ENCODE measurements at regions of chr2 and their contacts with region 1.

Region 1: GRCh38 chr2:189661148-189661956 is at the start of gene ASNSD1:
- DNase-seq: peak; percentile 96 to 98 (median 98)
- ATAC-seq: peak; percentile 96
- H3K4me3 ChIP-seq: peak within 1 kb of the TSS; percentile 78
- H3K27ac ChIP-seq: peak within 1 kb of the TSS; percentile 88
- H3K4me1 ChIP-seq: no peaks in the 10 kb centered on the region; a peak in 1 of 5 replicates
- H3K27me3 ChIP-seq: no peaks in the 10 kb centered on the region
- CTCF ChIP-seq: peak; percentile 93 to 99 (median 98)
- EP300 ChIP-seq: peak; percentile 27; the same call in 1 of the 2 replicates
- POLR2A ChIP-seq: peak; percentile 92
- RAD21 ChIP-seq: peak; percentile 92 to 97
- polyA plus RNA-seq, gene ASNSD1: 38.3 to 56.4 TPM

Region 2: GRCh38 chr2:189698020-189698887 is 36.9 kb after region 1 on chr2:
- CTCF ChIA-PET with region 1: interaction called, 38 read pairs
- POLR2A ChIA-PET with region 1: no interaction called
- in situ Hi-C with region 1: no loop called
- intact Hi-C with region 1: loop called (anchors 1 kb)
- DNase-seq: peak; percentile 30 to 50 (median 34)
- ATAC-seq: peak; percentile 95
- H3K4me3 ChIP-seq: no peak overlapping the region
- H3K27ac ChIP-seq: peak overlapping the region; percentile 39; the same call in 2 of the 3 replicates
- H3K4me1 ChIP-seq: no peaks in the 10 kb centered on the region; a peak in 3 of 5 replicates
- H3K27me3 ChIP-seq: no peaks in the 10 kb centered on the region
- CTCF ChIP-seq: peak in 2 of 3 experiments; percentile 42 to 62; a peak in 3 of 6 replicates
- EP300 ChIP-seq: no peak; the same call in 1 of the 2 replicates
- POLR2A ChIP-seq: no peak
- RAD21 ChIP-seq: no peak

Region 3: DNA sequence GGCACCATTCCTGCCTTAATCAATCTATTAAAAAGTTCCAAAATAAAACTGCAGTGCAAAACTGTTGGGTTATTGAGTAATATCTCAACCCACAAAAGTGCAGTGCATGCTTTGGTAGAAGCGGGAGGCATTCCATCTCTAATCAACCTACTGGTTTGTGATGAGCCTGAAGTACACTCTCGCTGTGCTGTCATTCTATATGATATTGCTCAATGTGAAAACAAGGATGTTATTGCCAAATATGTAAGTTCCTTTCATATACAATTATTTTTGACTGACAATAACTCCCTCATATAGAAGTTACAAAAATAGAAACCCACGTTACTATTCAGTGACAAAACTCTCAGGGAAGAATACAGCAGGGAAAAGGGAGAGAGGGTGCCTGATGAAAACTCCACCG is 58.2 kb after region 1 on chr2:
- CTCF ChIA-PET with region 1: no interaction called
- POLR2A ChIA-PET with region 1: no interaction called
- in situ Hi-C with region 1: no loop called
- intact Hi-C with region 1: no loop called
- DNase-seq: no peak
- ATAC-seq: no peak
- H3K4me3 ChIP-seq: no peak overlapping the region
- H3K27ac ChIP-seq: no peak overlapping the region
- H3K4me1 ChIP-seq: no peaks in the 10 kb centered on the region
- H3K27me3 ChIP-seq: no peaks in the 10 kb centered on the region
- CTCF ChIP-seq: no peak
- EP300 ChIP-seq: no peak
- POLR2A ChIP-seq: no peak
- RAD21 ChIP-seq: no peak

Region 4: GRCh38 chr2:189762551-189763298 is 101.4 kb after region 1 on chr2 and contains the start of gene OSGEPL1:
- CTCF ChIA-PET with region 1: interaction called, 7 read pairs
- POLR2A ChIA-PET with region 1: no interaction called
- in situ Hi-C with region 1: no loop called
- intact Hi-C with region 1: loop called (anchors 2 kb)
- DNase-seq: peak; percentile 72 to 96 (median 76)
- ATAC-seq: peak; percentile 97
- H3K4me3 ChIP-seq: peak within 1 kb of the TSS; percentile 70
- H3K27ac ChIP-seq: peak within 1 kb of the TSS; percentile 89
- H3K4me1 ChIP-seq: no peaks in the 10 kb centered on the region; a peak in 1 of 5 replicates
- H3K27me3 ChIP-seq: no peaks in the 10 kb centered on the region
- CTCF ChIP-seq: peak; percentile 48 to 56 (median 51); a peak in 5 of 6 replicates
- EP300 ChIP-seq: no peak; the same call in 1 of the 2 replicates
- POLR2A ChIP-seq: peak; percentile 91
- RAD21 ChIP-seq: no peak
- polyA plus RNA-seq, gene OSGEPL1: 8.9 to 9.3 TPM

Region 5: GRCh38 chr2:190319555-190320498 is 658.5 kb after region 1 on chr2 and contains the start of gene HIBCH:
- CTCF ChIA-PET with region 1: no interaction called
- POLR2A ChIA-PET with region 1: interaction called, 3 read pairs
- in situ Hi-C with region 1: no loop called
- intact Hi-C with region 1: loop called (anchors 10 kb)
- DNase-seq: peak; percentile 75 to 98 (median 82)
- ATAC-seq: peak; percentile 95
- H3K4me3 ChIP-seq: peak within 1 kb of the TSS; percentile 72
- H3K27ac ChIP-seq: peak within 1 kb of the TSS; percentile 52
- H3K4me1 ChIP-seq: peaks cover 0 to 12% of the 10 kb centered on the region in 2 experiments; a peak in 3 of 5 replicates
- H3K27me3 ChIP-seq: no peaks in the 10 kb centered on the region
- CTCF ChIP-seq: peak; percentile 83 to 85 (median 84)
- EP300 ChIP-seq: peak; percentile 16
- POLR2A ChIP-seq: peak; percentile 71
- RAD21 ChIP-seq: peak; percentile 9 to 31; a peak in 1 of 4 replicates
- polyA plus RNA-seq, gene HIBCH: 52.8 to 65.4 TPM

Measured in K562 (cell line).